ENCODE measurements at regions of chr13 and their contacts with region 1.

Region 1: GRCh38 chr13:27362064-27362883 is 62.1 kb upstream of the GTF3A start:
- DNase-seq: peak; percentile 46
- H3K4me3 ChIP-seq: peak overlapping the region; percentile 66
- H3K27ac ChIP-seq: no peak overlapping the region
- H3K27me3 ChIP-seq: peaks cover 6% of the 10 kb centered on the region
- CTCF ChIP-seq: peak; percentile 97

Region 2: DNA sequence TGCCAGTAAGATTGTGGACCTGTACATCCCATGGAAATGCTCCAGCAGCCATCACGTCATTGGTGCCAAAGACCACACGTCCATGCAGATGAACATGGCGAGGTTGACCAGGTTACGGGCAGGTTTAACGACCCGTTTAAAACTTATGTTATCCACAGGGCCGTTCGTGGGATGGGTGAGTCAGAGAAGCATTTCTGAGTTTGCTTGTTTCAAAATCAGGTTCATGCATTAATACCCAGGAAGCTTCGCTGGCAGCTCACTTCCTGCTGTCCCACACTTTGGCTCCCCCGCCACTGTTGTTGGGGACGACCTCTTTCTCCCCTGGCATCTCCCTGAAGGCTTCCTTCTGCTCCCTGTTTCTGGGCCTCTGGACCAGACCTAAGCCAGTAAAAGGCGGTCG is 384.7 kb before region 1 on chr13:
- CTCF ChIA-PET with region 1: interaction called, 365 read pairs
- POLR2A ChIA-PET with region 1: no interaction called
- DNase-seq: no peak
- H3K4me3 ChIP-seq: no peak overlapping the region
- H3K27ac ChIP-seq: no peak overlapping the region
- H3K27me3 ChIP-seq: no peaks in the 10 kb centered on the region
- CTCF ChIP-seq: no peak

Region 3: DNA sequence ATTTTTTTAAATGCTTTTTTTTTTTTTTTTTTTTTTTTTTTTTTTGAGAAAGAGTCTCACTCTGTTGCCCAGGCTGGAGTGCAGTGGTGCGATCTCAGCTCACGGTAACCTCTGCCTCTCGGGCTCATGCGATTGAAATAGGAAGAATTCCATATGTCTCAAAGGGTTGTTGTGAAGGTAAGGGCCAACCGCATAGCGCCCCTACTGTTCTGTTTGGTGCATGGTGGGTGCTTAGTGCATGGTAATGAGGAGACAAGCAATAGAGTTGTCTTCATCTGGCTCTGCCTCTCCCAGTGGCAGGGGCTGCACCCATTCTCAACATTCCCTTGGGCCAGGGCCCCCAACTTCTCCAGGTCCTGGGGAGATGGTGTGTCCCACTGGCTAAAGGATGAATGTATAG is 23.0 kb before region 1 on chr13:
- CTCF ChIA-PET with region 1: interaction called, 12 read pairs
- POLR2A ChIA-PET with region 1: no interaction called
- DNase-seq: no peak
- H3K4me3 ChIP-seq: no peak overlapping the region
- H3K27ac ChIP-seq: no peak overlapping the region
- H3K27me3 ChIP-seq: peaks cover 2% of the 10 kb centered on the region
- CTCF ChIP-seq: peak; percentile 67

Region 4: DNA sequence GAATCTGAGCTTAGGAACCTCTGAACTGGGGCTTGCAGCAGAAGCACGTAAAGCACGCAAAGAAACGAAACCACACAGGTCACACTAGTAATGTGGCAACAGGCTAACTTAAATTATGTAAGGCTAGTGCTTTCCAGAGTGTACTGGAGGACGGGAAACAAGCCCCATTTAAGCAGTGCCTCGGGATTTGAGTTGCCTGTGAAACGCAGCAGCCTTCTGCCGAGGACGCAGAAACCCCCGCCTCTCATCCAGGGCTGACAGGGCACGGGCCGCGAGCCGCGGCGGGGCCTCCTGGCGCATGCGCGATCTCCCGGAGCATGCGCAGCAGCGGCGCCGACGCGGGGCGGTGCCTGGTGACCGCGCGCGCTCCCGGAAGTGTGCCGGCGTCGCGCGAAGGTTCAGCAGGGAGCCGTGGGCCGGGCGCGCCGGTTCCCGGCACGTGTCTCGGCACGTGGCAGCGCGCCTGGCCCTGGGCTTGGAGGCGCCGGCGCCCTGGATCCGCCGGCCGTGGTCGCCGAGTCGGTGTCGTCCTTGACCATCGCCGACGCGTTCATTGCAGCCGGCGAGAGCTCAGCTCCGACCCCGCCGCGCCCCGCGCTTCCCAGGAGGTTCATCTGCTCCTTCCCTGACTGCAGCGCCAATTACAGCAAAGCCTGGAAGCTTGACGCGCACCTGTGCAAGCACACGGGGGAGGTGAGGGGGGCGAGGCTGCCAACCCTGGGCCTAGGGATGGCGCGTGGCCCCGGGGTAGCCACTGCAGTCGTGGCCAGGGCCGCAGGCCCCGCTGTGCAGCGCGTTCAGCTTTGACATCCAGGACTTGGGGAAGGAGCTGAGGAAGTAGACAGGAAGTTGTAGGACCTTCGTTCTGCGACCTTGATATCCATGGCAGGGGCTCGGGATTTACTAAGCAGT is 62.2 kb after region 1 on chr13 and contains the start of gene GTF3A:
- CTCF ChIA-PET with region 1: interaction called, 23 read pairs
- POLR2A ChIA-PET with region 1: no interaction called
- DNase-seq: peak; percentile 52
- H3K4me3 ChIP-seq: peak within 1 kb of the TSS; percentile 85
- H3K27ac ChIP-seq: peak within 1 kb of the TSS; percentile 21
- H3K27me3 ChIP-seq: no peaks in the 10 kb centered on the region
- CTCF ChIP-seq: no peak
- polyA plus RNA-seq, gene GTF3A: 89.0 and 104 TPM in 2 replicates

Region 5: DNA sequence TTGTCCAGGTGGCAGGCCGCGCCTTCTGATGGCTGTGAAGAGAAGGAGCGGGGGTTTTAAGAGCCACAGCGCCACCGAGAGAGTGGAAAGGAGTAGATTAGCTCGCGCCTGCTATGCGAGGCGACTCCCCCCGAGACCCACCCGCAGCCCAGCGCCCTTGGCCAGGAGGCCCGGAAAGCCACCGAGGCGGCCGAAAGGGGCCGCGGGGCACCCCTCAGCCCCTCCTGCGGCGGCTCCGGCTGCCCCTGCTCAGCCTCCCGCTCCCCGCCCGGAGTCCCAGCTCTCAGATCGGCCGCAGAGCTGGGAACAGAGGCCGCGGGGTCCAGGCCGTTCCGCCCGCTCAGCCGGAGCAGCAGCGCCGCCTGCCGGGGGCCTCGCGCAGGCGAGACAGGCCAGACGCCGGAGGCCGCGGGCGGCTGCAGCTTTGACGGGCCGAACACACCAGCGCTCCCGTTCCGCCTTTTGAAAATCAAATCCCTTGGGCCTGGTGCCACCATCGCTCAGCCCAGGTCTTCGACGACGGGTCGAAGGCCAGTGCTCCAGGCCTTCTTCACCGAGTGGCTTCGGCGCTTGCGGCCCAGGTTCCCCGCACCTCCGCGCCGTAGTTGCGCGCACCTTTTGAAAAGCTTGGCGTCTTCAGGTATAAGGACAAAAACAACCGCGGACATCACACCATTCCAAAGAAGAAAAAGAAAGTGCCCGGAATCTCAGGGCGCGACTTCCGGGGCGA is 591.6 kb after region 1 on chr13:
- CTCF ChIA-PET with region 1: interaction called, 42 read pairs
- POLR2A ChIA-PET with region 1: no interaction called
- DNase-seq: peak; percentile 10
- H3K4me3 ChIP-seq: peak overlapping the region; percentile 53
- H3K27ac ChIP-seq: no peak overlapping the region
- H3K27me3 ChIP-seq: peaks cover 51% of the 10 kb centered on the region
- CTCF ChIP-seq: peak; percentile 73